B cell (primary cell): ENCODE measurements at regions of chr5 and their contacts with region 1.

Region 1: DNA sequence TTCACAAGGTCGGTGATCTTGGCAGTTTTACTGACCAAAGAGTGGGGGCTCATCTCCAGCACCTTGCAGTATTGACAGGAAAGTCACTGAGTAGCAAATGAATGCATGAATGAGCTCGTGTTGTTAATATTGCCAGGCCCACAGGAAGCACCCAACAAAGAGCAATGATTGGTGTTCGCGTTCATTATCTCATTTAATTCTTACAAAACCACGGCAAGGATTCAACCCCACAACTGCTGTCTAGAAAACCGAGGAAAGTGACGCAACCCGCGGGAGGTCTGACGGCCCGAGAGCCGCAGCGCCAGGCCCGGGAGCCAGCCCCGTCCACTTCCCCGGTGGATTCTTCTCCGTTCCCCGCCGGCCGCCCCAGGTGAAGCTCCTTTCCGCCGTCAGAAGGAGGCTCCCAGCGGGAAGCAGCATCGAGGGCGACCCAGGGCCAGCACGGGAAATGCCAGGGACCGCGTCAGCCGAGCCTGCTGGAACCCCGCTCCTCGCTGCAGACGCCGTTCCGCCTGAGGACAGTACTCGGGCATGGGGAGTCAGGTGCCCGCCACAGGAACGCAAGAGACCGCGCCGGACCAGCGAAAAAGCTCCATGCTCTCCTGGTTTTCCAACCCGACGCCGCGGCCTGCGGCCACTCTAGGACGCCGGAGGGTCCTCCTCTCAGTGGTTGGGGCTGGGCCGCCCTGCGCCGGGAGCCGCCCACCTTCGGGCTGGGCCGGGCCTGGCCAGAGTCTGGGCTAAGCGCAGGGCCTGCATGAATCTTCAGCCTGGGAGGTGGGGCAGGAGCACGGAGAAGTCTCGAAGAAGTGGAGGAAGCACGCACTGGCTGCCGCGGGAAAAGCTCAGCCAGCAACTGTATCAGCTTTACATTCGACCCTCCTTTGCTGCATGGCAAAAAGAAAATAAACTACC is 19.8 kb upstream of the FER start:
- DNase-seq: peak; percentile 87
- ATAC-seq: peak; percentile 86
- H3K4me3 ChIP-seq: peak overlapping the region; percentile 71 to 98 (median 91)
- H3K4me3 Mint-ChIP-seq: peak overlapping the region; percentile 87
- H3K27ac ChIP-seq: peak overlapping the region; percentile 96
- H3K27ac Mint-ChIP-seq: peak overlapping the region; percentile 94
- H3K4me1 ChIP-seq: peaks cover 32 to 33% of the 10 kb centered on the region in 2 donors
- H3K4me1 Mint-ChIP-seq: peaks cover 44% of the 10 kb centered on the region
- H3K27me3 ChIP-seq: no peaks in the 10 kb centered on the region
- H3K27me3 Mint-ChIP-seq: no peaks in the 10 kb centered on the region
- CTCF ChIP-seq: no peak

Region 2: GRCh38 chr5:108381954-108382783 is 345.7 kb before region 1 on chr5 and contains the start of gene FBXL17:
- CTCF ChIA-PET with region 1: no interaction called
- POLR2A ChIA-PET with region 1: interaction called, 4 read pairs
- intact Hi-C with region 1: loop called (anchors 5 kb)
- DNase-seq: peak; percentile 96
- ATAC-seq: peak; percentile 70
- H3K4me3 ChIP-seq: peak within 1 kb of the TSS; percentile 64 to 99 (median 87)
- H3K4me3 Mint-ChIP-seq: peak within 1 kb of the TSS; percentile 87
- H3K27ac ChIP-seq: peak within 1 kb of the TSS; percentile 91 to 97
- H3K27ac Mint-ChIP-seq: peak within 1 kb of the TSS; percentile 94
- H3K4me1 ChIP-seq: peaks cover 17 to 20% of the 10 kb centered on the region in 2 donors
- H3K4me1 Mint-ChIP-seq: peaks cover 35% of the 10 kb centered on the region
- H3K27me3 ChIP-seq: no peaks in the 10 kb centered on the region
- H3K27me3 Mint-ChIP-seq: no peaks in the 10 kb centered on the region
- CTCF ChIP-seq: no peak
- total RNA-seq, gene FBXL17: 38.1 and 40.3 TPM in 2 replicates

Region 3: GRCh38 chr5:108748401-108749127 is 20.7 kb after region 1 on chr5:
- CTCF ChIA-PET with region 1: interaction called, 12 read pairs
- POLR2A ChIA-PET with region 1: interaction called, 26 read pairs
- intact Hi-C with region 1: loop called (anchors 1 kb)
- DNase-seq: peak; percentile 98
- ATAC-seq: peak; percentile 91
- H3K4me3 ChIP-seq: peak overlapping the region; percentile 74 to 90 (median 83)
- H3K4me3 Mint-ChIP-seq: peak overlapping the region; percentile 92
- H3K27ac ChIP-seq: peak overlapping the region; percentile 91 to 94
- H3K27ac Mint-ChIP-seq: peak overlapping the region; percentile 86
- H3K4me1 ChIP-seq: peaks cover 14 to 17% of the 10 kb centered on the region in 2 donors
- H3K4me1 Mint-ChIP-seq: peaks cover 10% of the 10 kb centered on the region
- H3K27me3 ChIP-seq: no peaks in the 10 kb centered on the region
- H3K27me3 Mint-ChIP-seq: no peaks in the 10 kb centered on the region
- CTCF ChIP-seq: no peak

Region 4: DNA sequence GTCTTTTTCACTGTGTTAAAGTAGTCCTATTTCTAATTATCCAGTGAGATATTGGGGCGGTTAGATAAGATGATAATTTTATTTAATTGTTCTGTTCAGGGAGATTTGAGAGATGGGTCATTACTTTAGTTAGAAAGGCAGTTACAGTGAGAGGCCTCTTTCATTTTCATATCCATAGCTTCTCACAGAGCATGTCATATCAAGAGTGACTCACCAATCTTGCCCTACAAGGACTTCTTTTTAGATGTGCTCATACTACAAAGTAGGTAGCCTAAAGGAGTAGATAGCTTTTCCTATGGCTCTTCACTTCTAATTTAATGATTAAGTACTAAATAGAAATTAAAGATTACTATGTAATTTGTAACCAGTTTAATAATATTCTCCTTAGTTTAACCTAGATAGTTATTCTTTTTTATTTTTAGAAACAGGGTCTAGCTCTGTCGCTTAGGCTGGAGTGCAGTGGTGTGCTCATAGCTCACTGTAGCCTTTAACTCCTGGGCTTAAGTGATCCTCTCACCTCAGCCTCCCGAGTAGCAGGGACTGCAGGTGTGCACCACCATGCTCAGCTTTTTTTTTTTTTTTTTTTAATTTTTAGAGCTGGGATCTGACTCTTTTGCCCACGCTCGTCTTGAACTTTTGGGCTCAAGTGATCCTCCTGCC is 90.8 kb after region 1 on chr5:
- CTCF ChIA-PET with region 1: no interaction called
- POLR2A ChIA-PET with region 1: no interaction called
- intact Hi-C with region 1: no loop called
- DNase-seq: no peak
- ATAC-seq: no peak
- H3K4me3 ChIP-seq: no peak overlapping the region
- H3K4me3 Mint-ChIP-seq: no peak overlapping the region
- H3K27ac ChIP-seq: no peak overlapping the region
- H3K27ac Mint-ChIP-seq: no peak overlapping the region
- H3K4me1 ChIP-seq: no peaks in the 10 kb centered on the region
- H3K4me1 Mint-ChIP-seq: peaks cover 2% of the 10 kb centered on the region
- H3K27me3 ChIP-seq: no peaks in the 10 kb centered on the region
- H3K27me3 Mint-ChIP-seq: no peaks in the 10 kb centered on the region
- CTCF ChIP-seq: no peak

Region 5: DNA sequence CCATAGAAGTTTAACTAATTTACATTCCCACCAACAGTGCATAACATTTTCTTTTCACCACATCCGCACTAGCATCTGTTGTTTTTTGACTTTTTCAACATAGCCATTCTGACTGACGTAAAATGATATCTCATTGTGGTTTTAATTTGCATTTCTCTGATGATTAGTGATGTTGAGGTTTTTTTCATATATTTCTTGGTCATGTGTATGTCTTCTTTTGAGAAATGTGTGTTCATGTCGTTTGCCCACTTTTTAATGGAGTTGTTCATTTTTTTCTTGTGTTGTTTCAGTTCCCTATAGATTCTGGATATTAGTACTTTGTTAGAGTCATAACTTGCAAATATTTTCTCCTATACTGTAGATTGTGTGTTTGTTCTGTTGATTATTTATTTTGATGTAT is 183.1 kb after region 1 on chr5:
- CTCF ChIA-PET with region 1: no interaction called
- POLR2A ChIA-PET with region 1: no interaction called
- intact Hi-C with region 1: loop called (anchors 1 kb)
- DNase-seq: peak; percentile 26
- ATAC-seq: peak; percentile 69
- H3K4me3 ChIP-seq: no peak overlapping the region
- H3K4me3 Mint-ChIP-seq: peak overlapping the region; percentile 12
- H3K27ac ChIP-seq: no peak overlapping the region
- H3K27ac Mint-ChIP-seq: peak overlapping the region; percentile 62
- H3K4me1 ChIP-seq: no peaks in the 10 kb centered on the region
- H3K4me1 Mint-ChIP-seq: peaks cover 14% of the 10 kb centered on the region
- H3K27me3 ChIP-seq: no peaks in the 10 kb centered on the region
- H3K27me3 Mint-ChIP-seq: no peaks in the 10 kb centered on the region
- CTCF ChIP-seq: no peak

Region 6: DNA sequence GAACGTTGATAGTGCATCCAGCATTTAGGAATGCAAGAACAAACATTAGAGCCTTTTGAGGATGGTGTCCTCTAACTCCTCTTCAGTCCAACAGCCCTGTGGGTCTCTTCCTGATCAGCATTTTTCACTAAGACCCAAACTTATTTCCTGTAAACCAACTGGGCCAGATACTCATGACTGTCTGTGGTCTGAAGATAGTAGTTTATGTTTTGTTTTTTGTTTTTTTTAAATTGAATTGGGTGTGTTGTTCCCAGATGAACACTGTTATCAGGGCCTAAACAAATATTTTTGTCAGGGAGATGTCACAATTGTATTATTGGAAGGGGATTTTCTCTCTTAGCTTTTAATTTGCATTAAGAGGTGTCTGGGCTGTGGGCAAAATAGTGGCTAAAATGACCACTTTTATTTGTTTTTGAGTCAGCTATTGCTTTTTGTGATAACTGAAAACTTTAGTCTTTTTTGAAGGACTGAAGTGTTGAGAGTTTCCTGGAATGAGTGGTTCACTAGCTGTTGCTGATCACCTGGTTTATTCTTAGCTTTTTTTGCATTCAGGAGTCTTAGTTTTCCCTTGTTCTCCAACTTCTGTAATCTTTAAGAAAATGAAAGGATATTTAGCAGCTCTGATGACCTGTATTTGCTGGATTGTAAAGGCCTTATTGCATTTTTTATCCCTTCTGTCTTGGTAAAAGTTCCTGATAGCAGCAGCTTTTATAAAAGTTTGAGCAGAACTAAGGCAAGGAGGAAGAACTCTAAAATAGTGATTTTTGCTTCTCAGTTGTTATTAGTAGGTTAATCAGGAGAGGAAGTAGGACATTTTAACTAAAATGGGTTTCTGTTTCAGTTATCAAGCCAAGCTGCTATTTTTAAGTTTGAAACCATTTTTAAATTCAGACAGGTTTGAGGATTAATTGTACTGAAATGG is 967.4 kb after region 1 on chr5:
- CTCF ChIA-PET with region 1: no interaction called
- POLR2A ChIA-PET with region 1: no interaction called
- intact Hi-C with region 1: loop called (anchors 5 kb)
- DNase-seq: peak; percentile 59
- ATAC-seq: peak; percentile 9
- H3K4me3 ChIP-seq: peak overlapping the region in 4 of 5 experiments; percentile 28 to 55 (median 38)
- H3K4me3 Mint-ChIP-seq: peak overlapping the region; percentile 86
- H3K27ac ChIP-seq: peak overlapping the region; percentile 76
- H3K27ac Mint-ChIP-seq: peak overlapping the region; percentile 93
- H3K4me1 ChIP-seq: peaks cover 69 to 82% of the 10 kb centered on the region in 2 donors
- H3K4me1 Mint-ChIP-seq: peaks cover 88% of the 10 kb centered on the region
- H3K27me3 ChIP-seq: no peaks in the 10 kb centered on the region
- H3K27me3 Mint-ChIP-seq: no peaks in the 10 kb centered on the region
- CTCF ChIP-seq: no peak